Lower leg skin (tissue), 4 donors: ENCODE measurements at regions of chr2 and their contacts with region 1.

Region 1: DNA sequence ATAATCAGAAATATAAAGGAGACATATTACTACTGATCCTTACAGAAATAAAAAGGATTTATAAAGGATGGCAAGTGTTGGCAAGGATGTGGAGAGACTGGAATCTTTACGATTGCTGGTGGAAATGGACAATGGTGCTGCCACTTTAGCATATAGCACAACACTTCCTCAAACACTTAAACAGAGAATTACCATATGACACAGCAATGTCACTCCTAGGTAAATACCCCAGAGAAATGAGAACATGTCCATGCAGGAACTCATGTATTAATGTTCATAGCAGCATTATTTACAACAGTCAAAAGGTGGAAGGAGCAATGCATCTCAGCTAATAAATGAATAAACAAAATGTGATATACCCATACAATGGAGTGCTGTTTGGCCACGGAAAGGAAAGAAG is 137.5 kb downstream of the NDUFA10 start:
- DNase-seq: no peak
- H3K4me3 ChIP-seq: no peak overlapping the region
- CTCF ChIP-seq: no peak
- POLR2A ChIP-seq: no peak

Region 2: DNA sequence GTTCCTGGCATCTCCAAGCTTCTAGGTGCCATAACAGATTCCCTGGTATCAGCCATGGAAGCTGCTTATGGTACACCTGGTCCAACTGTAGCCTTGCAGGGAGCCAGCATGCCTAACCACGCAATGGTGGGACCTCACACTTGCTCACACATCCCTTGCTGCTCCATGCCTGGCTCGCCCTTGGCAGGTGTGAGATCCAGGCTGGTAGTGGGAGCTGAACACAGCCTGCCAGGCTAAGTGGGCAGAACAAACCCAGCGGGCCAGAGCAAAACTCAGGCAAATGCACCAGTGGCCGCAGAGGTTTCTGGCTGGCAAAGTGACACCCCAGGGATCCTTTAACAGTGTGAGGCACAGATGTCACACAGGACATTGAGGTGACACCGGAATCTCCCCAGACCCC is 48.3 kb before region 1 on chr2:
- intact Hi-C with region 1: loop called (anchors 1 kb)
- DNase-seq: peak in 1 of 2 donors; percentile 69
- H3K4me3 ChIP-seq: no peak overlapping the region
- CTCF ChIP-seq: no peak
- POLR2A ChIP-seq: no peak